Caco-2 (cell line): ENCODE measurements at regions of chr1 and their contacts with region 1.

Region 1: DNA sequence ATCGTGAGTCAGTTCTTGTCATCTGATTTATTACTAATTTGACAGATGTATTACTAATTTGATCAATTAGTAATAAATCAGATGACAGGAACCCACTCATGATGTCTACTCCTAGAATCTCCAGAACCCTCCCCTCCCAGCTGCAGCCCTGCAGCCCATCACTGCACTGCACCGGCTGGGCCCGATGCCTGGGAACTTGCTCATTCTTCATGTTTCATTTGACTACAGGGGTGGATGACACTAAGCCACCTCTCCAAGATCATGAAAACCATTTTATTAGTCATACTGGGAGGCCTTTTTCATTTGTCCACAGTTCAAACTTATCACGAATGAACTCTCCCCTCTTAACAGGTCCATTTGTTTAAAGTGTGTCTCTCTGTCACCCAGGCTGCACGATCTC is 41.0 kb downstream of the KCNH1 start:
- DNase-seq: no peak
- H3K4me3 ChIP-seq: no peak overlapping the region
- H3K4me3 Mint-ChIP-seq: no peak overlapping the region
- H3K27ac Mint-ChIP-seq: no peak overlapping the region
- H3K4me1 ChIP-seq: no peaks in the 10 kb centered on the region
- H3K4me1 Mint-ChIP-seq: no peaks in the 10 kb centered on the region
- H3K27me3 ChIP-seq: peaks cover 1% of the 10 kb centered on the region; the same call in 1 of the 2 replicates
- H3K27me3 Mint-ChIP-seq: peaks cover 11% of the 10 kb centered on the region
- CTCF ChIP-seq: no peak

Region 2: DNA sequence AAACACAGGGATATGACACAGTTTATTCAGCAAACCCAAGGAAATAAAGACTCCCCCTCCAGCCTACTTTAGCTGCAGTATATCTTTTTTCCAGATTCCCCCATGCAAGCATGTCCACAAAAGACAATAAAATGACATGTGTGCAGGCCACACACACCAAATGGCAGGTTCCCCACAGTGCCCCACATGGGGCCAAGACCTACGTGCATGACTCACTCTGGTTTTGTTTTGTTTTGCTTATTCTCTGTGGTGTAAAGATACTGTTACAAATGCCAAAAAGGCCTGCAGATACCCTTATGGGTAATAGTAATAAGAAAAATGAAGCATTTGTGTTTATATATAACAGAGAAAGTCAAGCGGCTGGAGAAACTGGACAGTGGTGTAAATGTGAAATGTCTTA is 327.4 kb after region 1 on chr1:
- CTCF ChIA-PET with region 1: no interaction called
- POLR2A ChIA-PET with region 1: no interaction called
- intact Hi-C with region 1: loop called (anchors 10 kb)
- DNase-seq: no peak
- H3K4me3 ChIP-seq: no peak overlapping the region
- H3K4me3 Mint-ChIP-seq: no peak overlapping the region
- H3K27ac Mint-ChIP-seq: no peak overlapping the region
- H3K4me1 ChIP-seq: no peaks in the 10 kb centered on the region
- H3K4me1 Mint-ChIP-seq: no peaks in the 10 kb centered on the region
- H3K27me3 ChIP-seq: no peaks in the 10 kb centered on the region
- H3K27me3 Mint-ChIP-seq: peaks cover 3% of the 10 kb centered on the region
- CTCF ChIP-seq: no peak